ENCODE measurements at regions of chr3 and their contacts with region 1.

Region 1: GRCh38 chr3:125428216-125428830 is 53.2 kb upstream of the ZNF148 start:
- DNase-seq: no peak
- ATAC-seq: no peak

Region 2: DNA sequence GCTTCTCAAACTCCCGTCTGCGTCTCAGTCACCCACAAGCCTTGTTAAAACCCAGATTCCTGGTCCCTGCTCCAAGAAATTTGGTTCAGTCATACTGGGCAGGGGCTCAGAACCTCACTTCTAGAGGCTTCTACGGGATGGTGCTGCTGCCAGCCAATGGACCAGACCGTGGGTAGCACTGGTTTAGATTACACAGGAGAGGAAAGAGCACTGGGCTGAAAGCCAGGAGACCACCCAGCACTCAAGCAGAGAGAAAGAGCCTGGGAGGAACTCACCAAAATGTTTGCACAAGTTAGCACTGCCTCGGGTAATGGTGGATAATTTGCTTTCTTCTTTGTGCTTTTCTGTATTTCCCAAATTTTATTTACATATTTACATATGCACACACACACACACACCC is 446.9 kb before region 1 on chr3:
- intact Hi-C with region 1: loop called (anchors 5 kb)
- DNase-seq: no peak
- ATAC-seq: no peak